ENCODE measurements at regions of chr2 and their contacts with region 1.

Region 1: DNA sequence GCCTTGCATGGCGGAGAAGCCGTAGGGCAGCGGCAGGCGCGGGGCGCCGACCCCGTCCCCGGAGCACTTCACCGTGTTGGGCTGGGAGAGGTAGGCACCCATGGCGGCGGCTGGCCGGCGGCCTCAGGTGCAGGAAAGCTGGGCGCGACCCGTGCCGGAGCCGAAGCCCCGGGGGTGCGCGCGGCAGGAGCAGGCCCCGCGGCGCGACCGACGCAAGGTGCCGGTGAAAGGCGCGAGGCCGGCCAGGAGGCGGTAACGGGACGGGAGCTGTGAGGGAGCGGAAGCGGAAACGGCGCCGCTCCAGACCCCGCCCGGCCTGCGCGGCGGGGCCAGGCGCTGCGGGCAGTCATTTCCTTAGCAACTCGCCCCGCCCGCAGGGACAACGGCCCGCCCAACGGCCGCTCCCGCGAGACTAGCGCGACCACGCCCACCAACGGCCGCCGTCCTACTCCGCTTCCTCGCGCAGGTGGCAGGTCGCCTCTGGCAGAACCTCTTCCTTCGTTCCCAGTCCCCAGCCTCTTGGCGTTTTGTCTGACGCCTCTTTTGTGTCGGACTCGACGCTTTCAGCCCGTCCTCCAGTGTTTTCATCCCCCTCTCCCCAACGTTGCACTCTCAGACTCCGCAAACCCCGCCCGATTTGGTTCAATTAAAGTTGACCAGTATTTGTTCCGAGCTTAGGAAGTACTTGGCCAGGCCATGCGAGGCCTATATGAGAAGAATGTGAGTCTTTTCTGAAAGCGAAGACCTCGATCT is at the start of gene PPM1G:
- DNase-seq: peak; percentile 96
- ATAC-seq: peak; percentile 97
- H3K4me3 ChIP-seq: peak within 1 kb of the TSS; percentile 77
- H3K27ac ChIP-seq: peak within 1 kb of the TSS; percentile 50
- H3K4me1 ChIP-seq: peaks cover 21% of the 10 kb centered on the region; the same call in 1 of the 2 replicates
- H3K27me3 ChIP-seq: no peaks in the 10 kb centered on the region
- CTCF ChIP-seq: no peak
- total RNA-seq, gene PPM1G: 122 and 133 TPM in 2 replicates

Region 2: GRCh38 chr2:26959331-26959730 is 450.2 kb before region 1 on chr2:
- CTCF ChIA-PET with region 1: no interaction called
- POLR2A ChIA-PET with region 1: no interaction called
- intact Hi-C with region 1: no loop called
- DNase-seq: no peak
- ATAC-seq: no peak
- H3K4me3 ChIP-seq: no peak overlapping the region
- H3K27ac ChIP-seq: no peak overlapping the region
- H3K4me1 ChIP-seq: no peaks in the 10 kb centered on the region
- H3K27me3 ChIP-seq: peaks cover 21% of the 10 kb centered on the region; the same call in 1 of the 2 replicates
- CTCF ChIP-seq: no peak

Region 3: DNA sequence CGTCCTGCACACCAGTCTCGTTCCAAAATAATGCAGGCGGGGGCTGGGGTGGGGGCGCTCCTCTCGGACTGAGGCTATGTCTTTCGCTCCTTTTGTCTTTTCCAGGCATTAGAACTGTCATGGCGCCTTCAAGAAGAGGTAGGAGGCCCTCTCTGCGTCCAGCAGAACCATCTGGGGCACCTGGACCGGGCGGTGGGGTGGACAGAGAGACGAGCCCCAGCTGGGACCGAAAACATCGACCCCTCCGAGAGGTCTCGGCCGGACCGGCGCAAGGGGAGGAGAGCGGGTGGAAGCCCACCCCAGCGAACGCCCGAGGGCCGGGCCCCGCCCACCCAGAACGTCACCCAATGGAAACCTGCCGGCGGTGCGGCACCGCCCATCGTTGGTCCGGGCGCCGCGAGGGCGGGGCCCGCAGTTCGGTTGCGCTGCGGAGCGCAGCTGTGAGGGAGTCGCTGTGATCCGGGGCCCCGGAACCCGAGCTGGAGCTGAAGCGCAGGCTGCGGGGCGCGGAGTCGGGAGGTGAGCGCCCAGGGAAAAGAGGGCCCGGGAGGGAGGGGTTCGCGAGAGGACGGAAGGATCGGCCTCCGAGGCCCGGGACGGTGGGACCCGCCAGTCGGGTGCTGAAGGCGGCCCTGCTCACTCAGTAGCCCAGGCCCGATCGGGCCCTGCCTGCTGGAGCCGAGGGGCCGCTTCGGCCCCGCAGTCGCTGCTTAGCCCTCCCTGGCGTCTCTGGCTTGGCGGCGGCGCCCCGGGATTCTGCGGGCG is 18.9 kb after region 1 on chr2 and contains the start of gene NRBP1:
- CTCF ChIA-PET with region 1: interaction called, 4 read pairs
- POLR2A ChIA-PET with region 1: interaction called, 10 read pairs
- intact Hi-C with region 1: loop called (anchors 1 kb)
- DNase-seq: peak; percentile 94
- ATAC-seq: peak; percentile 84
- H3K4me3 ChIP-seq: peak within 1 kb of the TSS; percentile 85
- H3K27ac ChIP-seq: peak within 1 kb of the TSS; percentile 33
- H3K4me1 ChIP-seq: peaks cover 19% of the 10 kb centered on the region
- H3K27me3 ChIP-seq: no peaks in the 10 kb centered on the region
- CTCF ChIP-seq: peak; percentile 45
- total RNA-seq, gene NRBP1: 66.6 and 69.3 TPM in 2 replicates

Region 4: GRCh38 chr2:27628767-27629709 is 219.5 kb after region 1 on chr2 and contains the starts of genes CCDC121 and GPN1:
- CTCF ChIA-PET with region 1: no interaction called
- POLR2A ChIA-PET with region 1: no interaction called
- intact Hi-C with region 1: loop called (anchors 2 kb)
- DNase-seq: peak; percentile 96
- ATAC-seq: peak; percentile 95
- H3K4me3 ChIP-seq: peak within 1 kb of the TSS; percentile 87
- H3K27ac ChIP-seq: peak within 1 kb of the TSS; percentile 92
- H3K4me1 ChIP-seq: peaks cover 23% of the 10 kb centered on the region
- H3K27me3 ChIP-seq: no peaks in the 10 kb centered on the region
- CTCF ChIP-seq: no peak
- total RNA-seq, gene CCDC121: 0.87 and 2.7 TPM in 2 replicates
- total RNA-seq, gene GPN1: 40.9 and 46.8 TPM in 2 replicates

Region 5: DNA sequence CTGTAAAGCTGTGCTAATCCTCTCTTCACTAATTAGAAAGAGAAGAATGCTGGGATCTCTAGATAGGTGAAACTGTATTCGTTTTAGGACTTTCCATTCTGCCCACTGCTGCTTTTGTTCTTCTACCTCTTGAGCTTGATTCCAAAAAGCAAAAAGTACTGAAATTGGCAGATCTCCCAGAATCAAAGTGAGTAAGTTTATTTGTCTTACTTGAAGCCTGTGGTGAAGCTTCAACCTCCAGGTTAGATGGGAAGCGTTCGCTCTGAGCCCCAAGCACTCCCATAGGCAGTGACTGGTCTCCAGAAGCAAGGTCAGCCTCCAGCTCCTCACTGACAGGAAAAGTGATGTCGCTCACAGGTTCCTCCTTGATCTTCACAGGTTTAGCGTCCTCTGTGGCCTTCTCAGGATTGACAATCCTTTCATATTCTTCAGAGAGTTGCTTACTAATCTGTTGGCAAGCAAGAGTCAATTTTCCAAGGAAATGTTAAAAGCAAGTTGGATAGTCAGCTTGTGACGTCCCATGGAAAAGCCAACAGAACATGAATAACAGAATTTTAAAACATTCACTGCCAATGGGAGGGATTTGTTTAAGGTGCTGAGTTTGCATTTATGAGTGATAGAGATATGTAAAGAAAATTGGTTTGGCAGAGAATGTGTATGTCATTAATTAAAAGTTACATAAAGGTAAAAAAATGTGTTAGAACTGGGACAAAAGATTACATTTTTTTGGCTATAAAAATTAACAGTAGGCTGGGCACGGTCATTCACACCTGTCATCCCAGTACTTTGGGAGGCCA is 245.9 kb after region 1 on chr2:
- CTCF ChIA-PET with region 1: no interaction called
- POLR2A ChIA-PET with region 1: no interaction called
- intact Hi-C with region 1: loop called (anchors 10 kb)
- DNase-seq: peak; percentile 89
- ATAC-seq: peak; percentile 90
- H3K4me3 ChIP-seq: no peak overlapping the region
- H3K27ac ChIP-seq: peak overlapping the region; percentile 15
- H3K4me1 ChIP-seq: peaks cover 45% of the 10 kb centered on the region
- H3K27me3 ChIP-seq: no peaks in the 10 kb centered on the region
- CTCF ChIP-seq: peak; percentile 36; the same call in 1 of the 2 replicates

Region 6: GRCh38 chr2:27683390-27684071 is 274.0 kb after region 1 on chr2:
- CTCF ChIA-PET with region 1: no interaction called
- POLR2A ChIA-PET with region 1: interaction called, 10 read pairs
- intact Hi-C with region 1: loop called (anchors 1 kb)
- DNase-seq: peak; percentile 98
- ATAC-seq: peak; percentile 82
- H3K4me3 ChIP-seq: no peak overlapping the region
- H3K27ac ChIP-seq: peak overlapping the region; percentile 79
- H3K4me1 ChIP-seq: peaks cover 29% of the 10 kb centered on the region
- H3K27me3 ChIP-seq: no peaks in the 10 kb centered on the region
- CTCF ChIP-seq: peak; percentile 99

Region 7: GRCh38 chr2:27885234-27885633 is 475.7 kb after region 1 on chr2:
- CTCF ChIA-PET with region 1: no interaction called
- POLR2A ChIA-PET with region 1: no interaction called
- intact Hi-C with region 1: no loop called
- DNase-seq: no peak
- ATAC-seq: no peak
- H3K4me3 ChIP-seq: no peak overlapping the region
- H3K27ac ChIP-seq: no peak overlapping the region
- H3K4me1 ChIP-seq: peaks cover 15% of the 10 kb centered on the region
- H3K27me3 ChIP-seq: no peaks in the 10 kb centered on the region
- CTCF ChIP-seq: no peak

Measured in PC-3 (cell line).